Caco-2 (cell line): ENCODE measurements at regions of chr20 and their contacts with region 1.

Region 1: DNA sequence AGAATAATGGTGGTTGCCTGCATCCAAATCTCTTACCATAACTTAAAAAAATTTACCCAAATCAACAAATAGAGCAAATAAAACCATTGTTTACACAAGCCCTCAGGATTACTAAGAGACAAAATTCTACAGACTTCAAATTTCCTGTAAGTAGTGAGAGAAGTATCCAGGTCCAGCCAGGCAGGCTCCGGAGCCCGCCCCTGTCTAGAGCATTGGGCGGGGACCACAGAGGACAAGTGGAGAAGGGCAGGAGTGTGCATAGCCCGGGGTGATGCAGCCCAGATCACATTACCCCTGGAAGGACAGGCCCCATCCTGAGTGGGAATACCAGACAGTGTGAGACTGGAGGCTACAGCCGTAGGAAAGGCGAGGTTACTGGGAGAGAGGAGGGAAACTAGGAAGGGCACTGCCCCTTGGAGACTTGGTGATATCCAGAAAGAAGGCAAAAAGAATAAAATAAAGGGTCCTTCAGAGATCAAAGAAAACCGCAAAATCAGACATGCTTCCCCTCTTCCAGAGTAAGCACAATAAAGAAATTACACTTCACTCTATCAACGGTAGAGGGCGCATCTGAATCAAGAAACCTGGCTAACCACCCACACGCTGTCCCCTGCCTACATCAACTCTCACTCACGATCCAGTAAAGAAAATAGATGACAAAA is 26.6 kb downstream of the RIN2 start:
- DNase-seq: peak; percentile 78 to 79
- H3K4me3 ChIP-seq: no peak overlapping the region
- H3K4me3 Mint-ChIP-seq: peak overlapping the region; percentile 57
- H3K27ac Mint-ChIP-seq: peak overlapping the region; percentile 84
- H3K4me1 ChIP-seq: peaks cover 25% of the 10 kb centered on the region
- H3K4me1 Mint-ChIP-seq: peaks cover 16% of the 10 kb centered on the region
- H3K27me3 ChIP-seq: no peaks in the 10 kb centered on the region
- H3K27me3 Mint-ChIP-seq: no peaks in the 10 kb centered on the region
- CTCF ChIP-seq: peak; percentile 76 to 81

Region 2: GRCh38 chr20:19460386-19460785 is 324.3 kb before region 1 on chr20:
- CTCF ChIA-PET with region 1: no interaction called
- POLR2A ChIA-PET with region 1: no interaction called
- intact Hi-C with region 1: no loop called
- DNase-seq: no peak
- H3K4me3 ChIP-seq: no peak overlapping the region
- H3K4me3 Mint-ChIP-seq: no peak overlapping the region
- H3K27ac Mint-ChIP-seq: no peak overlapping the region
- H3K4me1 ChIP-seq: no peaks in the 10 kb centered on the region
- H3K4me1 Mint-ChIP-seq: no peaks in the 10 kb centered on the region
- H3K27me3 ChIP-seq: no peaks in the 10 kb centered on the region
- H3K27me3 Mint-ChIP-seq: peaks cover 3% of the 10 kb centered on the region
- CTCF ChIP-seq: no peak

Region 3: GRCh38 chr20:19692685-19693119 is 91.9 kb before region 1 on chr20:
- CTCF ChIA-PET with region 1: interaction called, 4 read pairs
- POLR2A ChIA-PET with region 1: no interaction called
- intact Hi-C with region 1: loop called (anchors 1 kb)
- DNase-seq: peak; percentile 55 to 73
- H3K4me3 ChIP-seq: no peak overlapping the region
- H3K4me3 Mint-ChIP-seq: peak overlapping the region; percentile 27
- H3K27ac Mint-ChIP-seq: no peak overlapping the region
- H3K4me1 ChIP-seq: 0 out of 2 replicates have a peak, but pooled peaks cover 8% of the 10 kb centered on the region
- H3K4me1 Mint-ChIP-seq: peaks cover 15% of the 10 kb centered on the region
- H3K27me3 ChIP-seq: no peaks in the 10 kb centered on the region
- H3K27me3 Mint-ChIP-seq: no peaks in the 10 kb centered on the region
- CTCF ChIP-seq: peak; percentile 90

Region 4: DNA sequence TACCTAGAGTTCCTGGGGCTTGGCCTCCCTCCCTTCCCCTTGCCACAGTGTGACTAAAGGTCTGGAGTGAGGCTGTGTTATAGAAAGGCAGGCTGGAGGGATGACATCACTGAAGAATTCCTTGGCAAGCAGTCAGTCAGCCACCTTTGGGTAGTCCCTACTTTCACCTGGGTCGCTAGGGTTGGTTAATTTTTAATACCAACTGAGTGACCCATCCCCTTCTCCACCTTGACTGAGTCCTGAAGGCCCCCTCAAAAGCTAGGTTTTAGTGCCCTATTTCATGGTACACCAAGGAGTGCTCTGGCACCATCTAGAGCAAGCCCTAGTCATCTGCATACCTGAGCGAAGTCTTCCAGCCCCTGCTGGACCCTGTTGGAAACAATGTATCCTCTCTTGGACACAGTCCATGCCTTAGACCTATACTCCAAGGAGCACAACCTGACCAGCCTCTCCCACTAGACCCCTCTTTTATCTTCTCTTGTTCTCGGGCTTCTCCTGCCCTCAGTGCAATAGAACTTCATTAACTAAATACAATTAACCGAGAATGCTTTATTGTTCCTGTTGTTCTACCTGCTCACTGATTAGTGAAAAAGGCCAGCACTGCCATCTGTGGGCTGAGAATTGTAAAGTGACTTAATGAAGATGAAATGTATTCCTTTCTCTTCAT is 18.0 kb after region 1 on chr20:
- CTCF ChIA-PET with region 1: interaction called, 7 read pairs
- POLR2A ChIA-PET with region 1: interaction called, 3 read pairs
- intact Hi-C with region 1: loop called (anchors 1 kb)
- DNase-seq: peak; percentile 78 to 82
- H3K4me3 ChIP-seq: no peak overlapping the region
- H3K4me3 Mint-ChIP-seq: no peak overlapping the region
- H3K27ac Mint-ChIP-seq: peak overlapping the region; percentile 14
- H3K4me1 ChIP-seq: peaks cover 27% of the 10 kb centered on the region
- H3K4me1 Mint-ChIP-seq: peaks cover 25% of the 10 kb centered on the region
- H3K27me3 ChIP-seq: no peaks in the 10 kb centered on the region
- H3K27me3 Mint-ChIP-seq: no peaks in the 10 kb centered on the region
- CTCF ChIP-seq: peak; percentile 80 to 90

Region 5: DNA sequence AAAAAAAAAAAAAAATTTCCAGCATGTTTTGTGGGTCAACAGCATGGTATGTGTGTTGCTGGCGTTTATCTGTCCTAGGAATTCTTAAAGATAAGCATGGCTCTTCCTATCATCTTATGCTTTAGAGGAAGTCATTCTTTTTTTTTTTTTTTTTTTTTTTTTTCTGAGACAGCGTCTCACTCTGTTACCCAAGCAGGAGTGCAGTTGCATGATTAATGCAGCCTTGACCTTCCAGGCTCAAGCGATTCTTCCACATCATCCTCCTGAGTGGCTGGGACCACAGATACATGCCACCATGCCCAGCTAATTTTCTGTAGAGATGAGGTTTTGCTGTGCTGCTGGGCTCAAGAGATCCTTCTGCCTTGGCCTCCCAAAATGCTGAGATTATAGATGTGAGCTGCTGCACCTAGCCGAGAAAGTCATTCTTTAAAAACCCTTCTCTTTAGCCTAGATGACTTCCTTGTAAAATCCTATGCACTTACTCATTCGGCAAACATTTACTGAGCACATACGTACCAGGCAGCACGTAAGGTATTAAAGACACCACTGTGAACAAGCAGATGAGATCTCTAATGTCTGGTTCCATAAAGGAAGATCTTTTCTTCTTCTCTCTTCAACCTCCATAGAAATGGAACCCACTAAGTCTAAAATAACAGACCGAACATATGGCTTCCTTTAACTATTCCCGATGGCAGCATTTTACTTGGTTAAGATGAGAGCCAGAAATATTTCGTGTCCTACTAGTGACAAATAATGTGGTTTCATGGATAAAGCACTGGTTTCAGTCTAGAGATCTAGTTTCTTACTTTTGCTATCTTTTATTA is 95.8 kb after region 1 on chr20:
- CTCF ChIA-PET with region 1: no interaction called
- POLR2A ChIA-PET with region 1: no interaction called
- intact Hi-C with region 1: loop called (anchors 2 kb)
- DNase-seq: peak; percentile 62 to 69
- H3K4me3 ChIP-seq: no peak overlapping the region
- H3K4me3 Mint-ChIP-seq: peak overlapping the region; percentile 62
- H3K27ac Mint-ChIP-seq: peak overlapping the region; percentile 96
- H3K4me1 ChIP-seq: peaks cover 72% of the 10 kb centered on the region
- H3K4me1 Mint-ChIP-seq: peaks cover 64% of the 10 kb centered on the region
- H3K27me3 ChIP-seq: no peaks in the 10 kb centered on the region
- H3K27me3 Mint-ChIP-seq: no peaks in the 10 kb centered on the region
- CTCF ChIP-seq: no peak

Region 6: DNA sequence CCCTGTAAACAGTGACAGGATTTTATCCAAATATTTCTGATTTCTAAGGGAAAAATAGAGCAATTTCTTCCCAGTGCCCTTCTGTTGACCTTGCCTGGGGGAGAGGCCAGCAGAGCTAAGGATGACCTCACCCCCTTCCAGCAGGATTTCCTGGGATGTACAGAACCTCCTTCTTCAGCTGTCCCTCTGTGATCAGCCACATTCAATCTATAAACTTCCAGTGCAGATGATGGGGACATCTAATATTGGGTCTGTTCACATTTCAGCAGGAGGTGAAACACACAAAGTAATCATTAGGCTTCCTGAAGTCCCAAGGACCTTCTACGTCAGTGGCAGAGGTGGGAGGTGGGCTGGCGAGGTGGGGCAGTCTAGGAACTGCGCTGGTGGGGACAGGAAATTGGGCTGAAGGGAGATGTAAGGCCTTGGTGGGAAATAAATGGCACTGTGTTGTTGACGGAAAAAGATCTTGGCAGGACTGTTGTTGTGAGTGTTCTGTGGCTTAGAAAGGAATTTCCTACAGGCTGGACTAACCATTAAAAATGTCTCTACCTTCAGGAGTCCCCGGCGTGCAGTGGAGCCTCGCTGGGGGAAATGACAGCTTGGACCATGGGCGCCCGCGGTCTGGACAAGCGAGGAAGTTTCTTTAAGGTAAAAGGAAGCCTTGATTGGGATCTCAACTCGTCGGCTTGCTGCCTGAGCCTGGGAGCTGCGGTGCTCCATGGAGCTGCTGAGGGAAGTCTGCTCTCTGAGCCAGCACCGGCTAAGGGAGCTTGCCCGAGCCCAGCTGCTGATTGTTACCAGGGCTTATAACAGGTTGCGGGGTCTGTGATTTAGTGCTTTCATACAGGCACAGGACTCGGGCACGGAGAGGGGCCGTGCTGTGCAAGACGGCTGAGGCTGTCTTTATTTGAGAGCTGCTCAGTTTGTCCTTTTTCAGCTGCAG is 104.6 kb after region 1 on chr20:
- CTCF ChIA-PET with region 1: no interaction called
- POLR2A ChIA-PET with region 1: no interaction called
- intact Hi-C with region 1: loop called (anchors 1 kb)
- DNase-seq: no peak
- H3K4me3 ChIP-seq: no peak overlapping the region
- H3K4me3 Mint-ChIP-seq: no peak overlapping the region
- H3K27ac Mint-ChIP-seq: peak overlapping the region; percentile 40
- H3K4me1 ChIP-seq: peaks cover 47% of the 10 kb centered on the region
- H3K4me1 Mint-ChIP-seq: peaks cover 36% of the 10 kb centered on the region
- H3K27me3 ChIP-seq: no peaks in the 10 kb centered on the region
- H3K27me3 Mint-ChIP-seq: no peaks in the 10 kb centered on the region
- CTCF ChIP-seq: no peak

Region 7: DNA sequence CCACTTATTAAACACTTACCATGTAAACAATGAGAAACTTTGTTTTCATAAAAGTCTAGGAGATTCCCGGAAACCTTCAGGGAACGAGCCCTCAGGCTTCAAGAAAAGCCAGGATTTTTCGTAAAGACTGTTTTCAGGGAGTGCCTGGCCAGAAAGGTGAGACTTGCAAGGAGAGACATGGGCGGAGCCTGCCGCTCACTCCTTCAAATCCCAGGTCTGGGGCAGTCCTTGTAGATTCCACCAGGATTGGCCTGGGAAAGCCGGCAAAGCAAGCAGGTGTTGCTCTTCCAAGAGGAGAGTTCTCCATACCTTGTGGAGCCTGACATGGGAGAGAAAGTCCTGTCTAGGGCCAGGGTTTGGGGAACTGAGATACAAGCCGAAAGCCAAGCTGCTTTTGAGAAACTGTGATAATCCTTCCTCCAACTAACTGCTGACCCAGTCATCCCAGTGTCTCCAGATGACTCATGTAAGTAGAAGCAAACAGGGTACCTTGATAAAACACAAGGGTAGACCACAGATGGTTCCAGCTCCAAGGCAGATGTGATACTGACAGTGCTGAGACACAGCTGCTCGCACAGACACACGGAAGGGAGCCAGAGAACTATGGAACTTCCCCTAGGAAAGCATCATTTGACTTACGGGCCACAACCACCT is 163.1 kb after region 1 on chr20:
- CTCF ChIA-PET with region 1: no interaction called
- POLR2A ChIA-PET with region 1: no interaction called
- intact Hi-C with region 1: no loop called
- DNase-seq: peak in 1 of 2 experiments; percentile 49
- H3K4me3 ChIP-seq: no peak overlapping the region
- H3K4me3 Mint-ChIP-seq: no peak overlapping the region
- H3K27ac Mint-ChIP-seq: no peak overlapping the region
- H3K4me1 ChIP-seq: peaks cover 17% of the 10 kb centered on the region
- H3K4me1 Mint-ChIP-seq: peaks cover 12% of the 10 kb centered on the region
- H3K27me3 ChIP-seq: no peaks in the 10 kb centered on the region
- H3K27me3 Mint-ChIP-seq: no peaks in the 10 kb centered on the region
- CTCF ChIP-seq: no peak

Region 8: DNA sequence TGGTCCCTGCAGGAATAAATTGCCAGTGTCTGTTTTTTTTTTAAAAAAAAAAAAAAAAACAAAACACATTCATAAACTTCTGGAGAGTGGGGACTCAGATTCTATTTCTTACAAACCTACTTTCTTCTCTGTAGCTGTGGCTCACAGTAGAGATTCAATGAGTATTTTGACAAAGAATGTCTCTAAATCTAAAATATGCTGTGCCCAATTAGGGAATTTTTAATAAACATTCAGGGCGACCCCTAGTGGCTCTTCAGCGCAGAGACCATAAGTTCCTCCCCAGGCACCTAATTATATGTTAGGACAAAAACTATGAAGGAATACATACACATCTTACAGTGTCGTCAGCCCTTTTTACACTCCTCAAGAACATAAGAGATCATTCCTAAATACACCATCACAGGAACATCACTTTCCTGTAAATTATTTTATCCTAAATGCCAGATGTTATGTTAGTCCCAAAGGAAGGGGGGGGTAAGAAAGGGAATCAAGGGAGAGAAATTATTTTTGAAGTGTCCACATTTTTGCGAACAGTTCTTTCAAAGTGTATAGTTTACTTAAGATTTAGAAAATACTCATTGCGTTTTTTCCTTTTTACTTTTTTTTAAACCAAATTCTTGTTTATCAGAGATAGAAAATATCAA is 210.7 kb after region 1 on chr20:
- CTCF ChIA-PET with region 1: interaction called, 3 read pairs
- POLR2A ChIA-PET with region 1: no interaction called
- intact Hi-C with region 1: loop called (anchors 1 kb)
- DNase-seq: peak in 1 of 2 experiments; percentile 37
- H3K4me3 ChIP-seq: no peak overlapping the region
- H3K4me3 Mint-ChIP-seq: no peak overlapping the region
- H3K27ac Mint-ChIP-seq: peak overlapping the region; percentile 81
- H3K4me1 ChIP-seq: peaks cover 44% of the 10 kb centered on the region
- H3K4me1 Mint-ChIP-seq: peaks cover 32% of the 10 kb centered on the region
- H3K27me3 ChIP-seq: no peaks in the 10 kb centered on the region
- H3K27me3 Mint-ChIP-seq: no peaks in the 10 kb centered on the region
- CTCF ChIP-seq: peak; percentile 79 to 86

Region 9: GRCh38 chr20:20017001-20017843 is 232.6 kb after region 1 on chr20 and contains the start of gene NAA20:
- CTCF ChIA-PET with region 1: no interaction called
- POLR2A ChIA-PET with region 1: no interaction called
- intact Hi-C with region 1: loop called (anchors 5 kb)
- DNase-seq: peak; percentile 97
- H3K4me3 ChIP-seq: peak within 1 kb of the TSS; percentile 83
- H3K4me3 Mint-ChIP-seq: peak within 1 kb of the TSS; percentile 90
- H3K27ac Mint-ChIP-seq: peak within 1 kb of the TSS; percentile 94
- H3K4me1 ChIP-seq: peaks cover 21% of the 10 kb centered on the region
- H3K4me1 Mint-ChIP-seq: peaks cover 14% of the 10 kb centered on the region
- H3K27me3 ChIP-seq: no peaks in the 10 kb centered on the region
- H3K27me3 Mint-ChIP-seq: no peaks in the 10 kb centered on the region
- CTCF ChIP-seq: peak; percentile 60 to 88
- total RNA-seq, gene NAA20: 77.5 and 81.5 TPM in 2 replicates